MCF 10A (cell line): ENCODE measurements at regions of chr7 and their contacts with region 1.

Region 1: GRCh38 chr7:102236592-102237287 is 49.9 kb upstream of the SH2B2 start:
- DNase-seq: peak; percentile 66
- H3K4me3 Mint-ChIP-seq: no peak overlapping the region
- H3K27ac Mint-ChIP-seq: peak overlapping the region; percentile 19
- H3K4me1 Mint-ChIP-seq: no peaks in the 10 kb centered on the region
- H3K27me3 Mint-ChIP-seq: no peaks in the 10 kb centered on the region
- CTCF ChIP-seq: peak; percentile 93

Region 2: GRCh38 chr7:101602484-101603241 is 634.1 kb before region 1 on chr7:
- CTCF ChIA-PET with region 1: interaction called, 16 read pairs
- POLR2A ChIA-PET with region 1: no interaction called
- intact Hi-C with region 1: loop called (anchors 1 kb)
- DNase-seq: peak; percentile 74
- H3K4me3 Mint-ChIP-seq: no peak overlapping the region
- H3K27ac Mint-ChIP-seq: no peak overlapping the region
- H3K4me1 Mint-ChIP-seq: no peaks in the 10 kb centered on the region
- H3K27me3 Mint-ChIP-seq: no peaks in the 10 kb centered on the region
- CTCF ChIP-seq: peak; percentile 92

Region 3: DNA sequence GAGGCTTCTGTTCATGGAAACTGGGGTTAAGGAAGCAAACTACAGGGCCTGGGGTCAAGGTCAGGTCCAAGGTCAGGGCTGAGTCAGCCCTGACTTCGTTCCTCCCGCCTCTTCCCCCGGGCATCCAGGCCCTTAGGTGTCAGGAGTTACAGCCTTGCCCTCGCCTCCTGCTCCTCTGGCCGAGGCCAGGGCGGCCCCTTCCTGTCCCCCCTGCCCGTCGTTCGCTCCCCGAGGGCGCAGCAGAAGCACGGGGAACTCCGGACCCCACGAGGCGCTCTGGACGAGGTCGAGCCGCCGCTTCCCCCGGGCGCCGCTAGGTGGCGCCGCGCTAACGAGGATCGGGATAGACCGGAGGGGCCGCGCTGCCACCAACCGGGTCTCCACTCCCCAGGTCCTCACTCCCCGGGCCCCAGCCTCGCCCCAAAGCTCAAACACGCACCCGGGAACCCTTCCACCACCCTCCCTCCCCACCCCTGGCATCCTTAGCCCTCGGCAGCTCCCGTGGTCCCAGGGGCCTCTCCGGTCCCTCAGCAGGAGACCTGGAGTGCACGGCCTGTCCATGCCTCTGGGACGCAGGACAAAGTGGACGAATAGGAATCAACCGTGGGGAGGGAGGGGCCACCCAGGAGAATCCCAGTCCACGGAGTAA is 548.4 kb before region 1 on chr7:
- CTCF ChIA-PET with region 1: interaction called, 9 read pairs
- POLR2A ChIA-PET with region 1: no interaction called
- intact Hi-C with region 1: loop called (anchors 1 kb)
- DNase-seq: peak; percentile 66
- H3K4me3 Mint-ChIP-seq: no peak overlapping the region
- H3K27ac Mint-ChIP-seq: no peak overlapping the region
- H3K4me1 Mint-ChIP-seq: no peaks in the 10 kb centered on the region
- H3K27me3 Mint-ChIP-seq: no peaks in the 10 kb centered on the region
- CTCF ChIP-seq: peak; percentile 95

Region 4: GRCh38 chr7:101856473-101857357 is 380.0 kb before region 1 on chr7:
- CTCF ChIA-PET with region 1: interaction called, 4 read pairs
- POLR2A ChIA-PET with region 1: no interaction called
- intact Hi-C with region 1: loop called (anchors 1 kb)
- DNase-seq: peak; percentile 95
- H3K4me3 Mint-ChIP-seq: peak overlapping the region; percentile 70
- H3K27ac Mint-ChIP-seq: peak overlapping the region; percentile 74
- H3K4me1 Mint-ChIP-seq: peaks cover 32% of the 10 kb centered on the region
- H3K27me3 Mint-ChIP-seq: no peaks in the 10 kb centered on the region
- CTCF ChIP-seq: peak; percentile 53

Region 5: DNA sequence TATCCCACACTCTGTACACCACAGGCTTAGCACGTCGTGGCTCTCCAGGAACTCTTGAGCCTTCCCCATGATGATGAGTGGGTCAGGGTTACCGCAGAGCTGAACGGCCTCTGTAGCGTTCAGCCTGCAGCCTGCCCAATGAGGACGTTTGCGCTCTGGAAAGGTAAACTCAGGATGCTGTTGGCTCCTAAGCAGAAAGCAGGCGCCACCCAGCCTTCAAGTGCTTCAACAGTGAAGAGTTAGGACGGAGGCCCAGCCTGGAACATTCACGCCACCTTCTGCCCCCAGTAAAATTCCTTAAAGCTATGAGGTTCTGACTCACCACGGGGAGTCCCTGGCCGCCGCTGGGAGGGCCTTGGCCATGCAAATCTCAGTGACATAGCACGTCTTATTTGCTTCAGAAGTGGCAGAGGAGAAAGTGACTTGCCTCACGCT is 111.6 kb before region 1 on chr7:
- CTCF ChIA-PET with region 1: no interaction called
- POLR2A ChIA-PET with region 1: no interaction called
- intact Hi-C with region 1: loop called (anchors 10 kb)
- DNase-seq: peak; percentile 89
- H3K4me3 Mint-ChIP-seq: no peak overlapping the region
- H3K27ac Mint-ChIP-seq: no peak overlapping the region
- H3K4me1 Mint-ChIP-seq: peaks cover 4% of the 10 kb centered on the region
- H3K27me3 Mint-ChIP-seq: no peaks in the 10 kb centered on the region
- CTCF ChIP-seq: no peak

Region 6: GRCh38 chr7:102175423-102176170 is 61.1 kb before region 1 on chr7:
- CTCF ChIA-PET with region 1: no interaction called
- POLR2A ChIA-PET with region 1: no interaction called
- intact Hi-C with region 1: no loop called
- DNase-seq: no peak
- H3K4me3 Mint-ChIP-seq: no peak overlapping the region
- H3K27ac Mint-ChIP-seq: no peak overlapping the region
- H3K4me1 Mint-ChIP-seq: no peaks in the 10 kb centered on the region
- H3K27me3 Mint-ChIP-seq: no peaks in the 10 kb centered on the region
- CTCF ChIP-seq: no peak